MCF 10A (cell line): ENCODE measurements at regions of chr5 and their contacts with region 1.

Region 1: DNA sequence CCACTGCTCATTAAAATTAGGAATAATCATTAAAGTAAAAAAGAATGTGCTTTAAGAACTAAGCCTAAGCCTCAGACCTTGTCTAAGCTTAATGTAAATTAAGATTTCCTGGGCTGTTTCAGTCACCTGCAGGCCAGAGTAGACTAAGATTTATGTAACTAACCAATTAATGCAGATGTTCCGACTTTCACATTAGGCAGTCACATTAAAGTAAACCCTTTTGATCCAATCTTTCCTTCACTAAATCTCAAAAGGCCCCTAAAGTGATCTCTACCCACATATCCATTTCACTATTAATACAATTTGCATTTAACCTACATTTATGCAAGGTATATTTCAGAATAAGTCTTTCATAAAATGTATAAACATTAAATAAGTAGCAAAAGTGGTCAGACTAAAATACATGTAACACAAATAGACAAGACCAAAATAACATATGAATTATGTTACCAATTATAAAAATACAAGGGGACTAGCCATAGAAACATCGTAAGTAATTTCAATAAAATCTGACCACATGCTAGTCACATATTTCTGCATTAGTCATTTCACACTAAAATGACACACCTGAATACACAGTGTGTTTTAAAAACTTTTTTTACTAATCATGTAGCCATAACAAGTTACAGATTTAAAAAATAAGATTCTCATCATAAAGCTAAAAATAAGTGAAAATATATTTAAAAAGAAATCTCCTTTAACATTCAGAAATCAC is 7.7 kb downstream of the NR3C1 start:
- DNase-seq: peak; percentile 49
- H3K4me3 Mint-ChIP-seq: peak overlapping the region; percentile 98
- H3K27ac Mint-ChIP-seq: peak overlapping the region; percentile 99
- H3K4me1 Mint-ChIP-seq: peaks cover 49% of the 10 kb centered on the region
- H3K27me3 Mint-ChIP-seq: no peaks in the 10 kb centered on the region
- CTCF ChIP-seq: no peak

Region 2: DNA sequence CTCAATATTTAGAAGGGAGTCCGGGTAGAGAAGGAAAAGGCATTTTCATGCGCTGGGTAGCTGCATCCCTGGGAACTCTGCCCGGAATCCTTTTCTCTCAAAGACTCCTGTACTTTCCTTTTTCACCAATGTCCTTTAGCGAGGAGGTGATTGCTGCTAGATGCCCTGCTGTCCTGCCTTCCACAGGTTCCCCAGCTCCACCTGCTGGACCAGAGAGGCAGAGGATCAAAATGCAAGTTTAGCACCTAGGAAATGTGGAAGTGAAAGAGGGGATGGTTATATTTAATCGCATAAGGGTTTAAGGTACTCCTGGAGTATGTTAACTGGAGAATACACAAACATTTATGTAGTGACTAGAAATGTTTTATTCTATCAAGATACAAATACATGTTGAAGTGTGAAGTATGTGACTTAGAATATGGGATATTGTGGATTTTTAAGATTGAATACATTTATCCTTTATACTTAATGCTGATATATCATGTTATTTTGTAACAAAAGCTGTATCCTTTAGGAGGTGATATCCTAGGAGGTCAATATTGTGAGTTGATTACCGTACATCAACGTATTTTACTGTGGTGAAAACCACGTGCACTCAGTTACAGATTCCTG is 479.9 kb before region 1 on chr5:
- CTCF ChIA-PET with region 1: interaction called, 12 read pairs
- POLR2A ChIA-PET with region 1: interaction called, 4 read pairs
- intact Hi-C with region 1: no loop called
- DNase-seq: peak; percentile 78
- H3K4me3 Mint-ChIP-seq: no peak overlapping the region
- H3K27ac Mint-ChIP-seq: no peak overlapping the region
- H3K4me1 Mint-ChIP-seq: peaks cover 7% of the 10 kb centered on the region
- H3K27me3 Mint-ChIP-seq: no peaks in the 10 kb centered on the region
- CTCF ChIP-seq: peak; percentile 79

Region 3: DNA sequence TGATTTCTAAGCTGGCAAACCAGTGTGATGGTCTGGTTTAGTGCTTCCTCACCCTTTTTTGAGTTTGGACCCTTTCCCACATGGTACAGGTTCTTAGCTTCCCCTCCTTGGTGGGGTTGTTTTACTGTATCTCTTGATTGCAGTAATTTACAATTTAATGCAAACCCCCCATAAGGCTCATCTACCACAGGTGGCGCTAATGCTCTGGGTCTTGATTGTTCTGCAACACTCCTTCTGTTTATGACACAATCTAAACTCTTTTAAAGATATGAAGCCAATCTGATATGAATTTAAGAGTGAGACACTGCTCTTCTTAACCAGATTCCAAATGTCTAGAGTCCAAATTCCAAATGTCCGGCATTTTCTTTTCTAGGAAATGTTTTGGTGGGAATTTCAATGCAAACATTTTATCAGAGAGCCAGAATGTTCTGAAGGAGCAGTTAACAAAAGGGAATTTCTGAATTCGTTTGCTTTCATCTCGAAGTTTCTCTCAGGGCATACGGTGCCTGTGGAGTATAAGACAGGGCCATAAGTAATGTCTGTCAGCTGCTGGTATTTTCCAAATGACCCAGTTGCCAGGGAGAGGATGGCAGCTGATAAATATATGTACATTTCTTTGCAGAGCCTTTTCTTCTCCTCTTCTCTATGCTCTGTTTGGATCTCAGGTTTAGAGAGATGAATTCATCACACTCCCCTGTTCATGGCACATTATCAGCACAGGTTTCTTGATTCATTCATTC is 378.8 kb before region 1 on chr5:
- CTCF ChIA-PET with region 1: interaction called, 3 read pairs
- POLR2A ChIA-PET with region 1: interaction called, 4 read pairs
- intact Hi-C with region 1: loop called (anchors 1 kb)
- DNase-seq: peak; percentile 85
- H3K4me3 Mint-ChIP-seq: no peak overlapping the region
- H3K27ac Mint-ChIP-seq: no peak overlapping the region
- H3K4me1 Mint-ChIP-seq: peaks cover under 1% of the 10 kb centered on the region
- H3K27me3 Mint-ChIP-seq: no peaks in the 10 kb centered on the region
- CTCF ChIP-seq: peak; percentile 83

Region 4: GRCh38 chr5:143177263-143177983 is 218.4 kb before region 1 on chr5:
- CTCF ChIA-PET with region 1: interaction called, 4 read pairs
- POLR2A ChIA-PET with region 1: interaction called, 32 read pairs
- intact Hi-C with region 1: loop called (anchors 1 kb)
- DNase-seq: peak; percentile 99
- H3K4me3 Mint-ChIP-seq: no peak overlapping the region
- H3K27ac Mint-ChIP-seq: peak overlapping the region; percentile 86
- H3K4me1 Mint-ChIP-seq: peaks cover 16% of the 10 kb centered on the region
- H3K27me3 Mint-ChIP-seq: no peaks in the 10 kb centered on the region
- CTCF ChIP-seq: no peak

Region 5: GRCh38 chr5:143262393-143263174 is 133.2 kb before region 1 on chr5:
- CTCF ChIA-PET with region 1: interaction called, 4 read pairs
- POLR2A ChIA-PET with region 1: interaction called, 3 read pairs
- intact Hi-C with region 1: loop called (anchors 2 kb)
- DNase-seq: peak; percentile 95
- H3K4me3 Mint-ChIP-seq: peak overlapping the region; percentile 7
- H3K27ac Mint-ChIP-seq: peak overlapping the region; percentile 61
- H3K4me1 Mint-ChIP-seq: peaks cover 35% of the 10 kb centered on the region
- H3K27me3 Mint-ChIP-seq: no peaks in the 10 kb centered on the region
- CTCF ChIP-seq: no peak

Region 6: DNA sequence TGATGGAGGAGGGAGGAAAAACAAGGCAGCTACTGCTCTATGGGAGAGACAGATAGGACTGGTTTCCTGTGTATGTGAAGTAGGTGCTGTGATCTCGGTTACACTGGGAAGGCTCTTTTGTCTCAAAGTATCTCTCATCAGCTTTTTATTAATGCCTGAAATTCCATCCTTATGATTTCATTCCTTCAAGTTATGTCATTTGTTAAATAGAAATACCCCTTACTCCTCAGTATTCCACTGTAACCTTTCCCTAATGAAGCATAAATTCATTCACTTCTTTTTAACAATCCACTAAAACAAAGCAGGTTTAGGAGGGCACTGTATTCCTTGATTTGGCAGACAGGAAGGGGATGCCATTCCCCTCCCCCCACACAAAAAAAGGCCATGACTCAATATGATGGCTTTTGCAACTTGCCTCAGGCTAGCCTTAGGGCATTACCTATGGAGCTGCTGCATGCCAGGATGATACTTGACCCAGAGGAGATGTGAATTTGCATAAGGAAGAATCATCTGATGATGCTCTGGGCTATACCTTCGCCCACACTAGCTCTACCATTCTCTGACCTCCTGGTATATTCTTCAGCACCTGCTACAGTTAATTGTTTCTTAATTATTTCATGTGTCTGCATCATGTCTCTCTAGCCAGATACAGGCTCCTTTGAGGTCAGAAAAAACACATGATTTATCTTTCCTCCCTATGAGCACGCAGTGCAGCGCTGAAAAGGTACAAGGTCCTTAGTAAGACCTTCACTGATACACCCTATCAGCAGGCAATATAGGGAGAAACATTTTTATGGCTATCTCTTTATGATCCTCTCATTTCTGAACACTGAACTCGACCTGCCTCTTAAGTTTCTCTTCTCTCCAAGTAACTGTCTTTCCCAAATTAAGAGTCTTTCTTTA is 18.6 kb before region 1 on chr5:
- CTCF ChIA-PET with region 1: interaction called, 4 read pairs
- POLR2A ChIA-PET with region 1: interaction called, 15 read pairs
- intact Hi-C with region 1: no loop called
- DNase-seq: peak; percentile 72
- H3K4me3 Mint-ChIP-seq: no peak overlapping the region
- H3K27ac Mint-ChIP-seq: peak overlapping the region; percentile 20
- H3K4me1 Mint-ChIP-seq: peaks cover 31% of the 10 kb centered on the region
- H3K27me3 Mint-ChIP-seq: no peaks in the 10 kb centered on the region
- CTCF ChIP-seq: no peak